ENCODE measurements at regions of chr11 and their contacts with region 1.

Region 1: GRCh38 chr11:65662799-65663638 is at the start of gene RELA:
- H3K4me3 Mint-ChIP-seq: peak within 1 kb of the TSS; percentile 82
- H3K27ac Mint-ChIP-seq: peak within 1 kb of the TSS; percentile 95
- H3K4me1 Mint-ChIP-seq: peaks cover 27% of the 10 kb centered on the region
- H3K27me3 Mint-ChIP-seq: no peaks in the 10 kb centered on the region

Region 2: DNA sequence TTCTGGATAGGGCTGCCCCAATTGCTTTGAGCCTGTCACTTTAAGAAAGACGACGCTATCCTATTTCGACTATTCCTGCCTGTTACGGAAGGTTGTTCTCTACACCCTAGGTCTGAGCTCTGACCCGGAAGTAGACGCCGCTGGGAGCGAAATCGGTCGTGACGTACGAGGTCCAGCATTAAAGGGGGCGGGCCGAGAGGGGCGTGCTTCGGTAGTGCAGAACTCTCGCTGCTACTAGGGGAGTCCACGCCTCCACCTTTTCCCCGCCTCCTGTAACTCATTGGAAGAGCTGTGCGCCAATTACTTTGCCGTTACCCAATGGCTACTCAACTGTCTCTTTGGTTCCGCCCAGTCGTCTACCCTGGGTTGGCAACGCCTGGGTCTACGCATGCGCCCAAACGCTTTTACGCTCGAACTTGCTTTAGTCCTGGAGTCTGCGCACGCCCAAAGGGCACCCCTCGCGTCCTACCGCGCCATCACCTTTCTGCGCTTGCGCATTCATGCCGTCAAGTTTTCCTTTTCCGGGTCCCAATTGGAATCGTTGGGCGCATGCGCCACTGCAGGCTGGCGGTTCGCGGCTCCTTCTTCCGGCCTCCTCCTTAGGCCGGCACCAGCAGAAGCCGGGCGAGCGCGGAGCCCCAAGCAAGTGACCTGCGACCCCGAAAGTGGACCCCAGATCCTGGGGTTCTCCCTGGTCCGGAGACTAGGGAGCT is 47.6 kb before region 1 on chr11 and contains the start of gene PCNX3:
- intact Hi-C with region 1: loop called (anchors 1 kb)
- H3K4me3 Mint-ChIP-seq: peak within 1 kb of the TSS; percentile 91
- H3K27ac Mint-ChIP-seq: peak within 1 kb of the TSS; percentile 95
- H3K4me1 Mint-ChIP-seq: peaks cover 54% of the 10 kb centered on the region
- H3K27me3 Mint-ChIP-seq: no peaks in the 10 kb centered on the region